ENCODE measurements at regions of chr6 and their contacts with region 1.

Region 1: GRCh38 chr6:166989427-166990032 is 9.7 kb upstream of the CEP43 start:
- DNase-seq: peak; percentile 46
- H3K4me3 Mint-ChIP-seq: no peak overlapping the region
- H3K27ac Mint-ChIP-seq: no peak overlapping the region
- H3K4me1 Mint-ChIP-seq: peaks cover 33% of the 10 kb centered on the region
- H3K27me3 Mint-ChIP-seq: no peaks in the 10 kb centered on the region

Region 2: DNA sequence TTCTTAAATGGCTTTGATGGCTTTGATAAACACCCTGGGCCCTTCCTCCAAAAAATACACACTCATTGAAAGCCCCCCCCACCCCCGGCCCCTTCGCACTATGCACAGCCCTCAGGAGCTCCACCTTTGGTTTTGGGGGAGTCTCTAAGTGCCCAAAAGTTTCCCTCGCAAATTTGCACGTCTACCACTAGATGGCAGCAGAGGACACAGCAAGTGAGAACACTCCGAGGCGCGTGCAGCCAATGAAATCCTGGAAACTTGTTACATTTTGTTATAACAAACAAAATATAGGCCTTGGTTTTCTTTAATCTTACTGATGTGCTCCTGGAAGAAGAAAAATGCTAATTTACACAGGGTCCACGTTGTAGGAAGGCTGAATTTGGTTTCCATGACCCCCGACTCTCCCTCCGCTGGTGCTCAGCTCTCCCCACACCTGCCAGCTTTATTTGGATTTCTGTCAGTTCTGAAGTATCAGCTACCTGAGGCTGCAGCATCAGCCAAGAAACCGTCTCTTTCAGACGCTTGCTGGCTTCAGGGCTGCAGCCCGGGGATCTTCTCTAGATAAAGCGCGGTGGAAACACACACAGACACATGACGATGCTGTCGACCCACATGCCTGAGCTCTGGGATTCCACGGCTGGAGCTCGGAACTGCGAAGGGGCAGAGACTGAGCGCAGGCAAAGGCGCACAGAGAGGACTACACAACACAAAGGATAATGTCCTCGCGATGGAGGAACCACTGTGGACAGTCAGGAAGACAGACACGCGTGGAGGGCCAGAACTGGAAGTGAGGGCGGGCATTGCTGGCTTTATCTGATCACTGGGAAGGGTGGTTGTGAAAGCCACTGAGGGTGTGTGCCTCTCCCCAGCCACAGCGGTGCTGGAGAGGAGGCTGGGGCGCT is 214.1 kb before region 1 on chr6:
- CTCF ChIA-PET with region 1: interaction called, 51 read pairs
- POLR2A ChIA-PET with region 1: interaction called, 3 read pairs
- DNase-seq: peak; percentile 63
- H3K4me3 Mint-ChIP-seq: no peak overlapping the region
- H3K27ac Mint-ChIP-seq: no peak overlapping the region
- H3K4me1 Mint-ChIP-seq: peaks cover 3% of the 10 kb centered on the region
- H3K27me3 Mint-ChIP-seq: peaks cover 14% of the 10 kb centered on the region

Region 3: GRCh38 chr6:166950443-166950821 is 39.1 kb before region 1 on chr6:
- CTCF ChIA-PET with region 1: interaction called, 25 read pairs
- POLR2A ChIA-PET with region 1: interaction called, 19 read pairs
- DNase-seq: peak; percentile 51
- H3K4me3 Mint-ChIP-seq: peak overlapping the region; percentile 67
- H3K27ac Mint-ChIP-seq: peak overlapping the region; percentile 100
- H3K4me1 Mint-ChIP-seq: peaks cover 61% of the 10 kb centered on the region
- H3K27me3 Mint-ChIP-seq: no peaks in the 10 kb centered on the region

Region 4: DNA sequence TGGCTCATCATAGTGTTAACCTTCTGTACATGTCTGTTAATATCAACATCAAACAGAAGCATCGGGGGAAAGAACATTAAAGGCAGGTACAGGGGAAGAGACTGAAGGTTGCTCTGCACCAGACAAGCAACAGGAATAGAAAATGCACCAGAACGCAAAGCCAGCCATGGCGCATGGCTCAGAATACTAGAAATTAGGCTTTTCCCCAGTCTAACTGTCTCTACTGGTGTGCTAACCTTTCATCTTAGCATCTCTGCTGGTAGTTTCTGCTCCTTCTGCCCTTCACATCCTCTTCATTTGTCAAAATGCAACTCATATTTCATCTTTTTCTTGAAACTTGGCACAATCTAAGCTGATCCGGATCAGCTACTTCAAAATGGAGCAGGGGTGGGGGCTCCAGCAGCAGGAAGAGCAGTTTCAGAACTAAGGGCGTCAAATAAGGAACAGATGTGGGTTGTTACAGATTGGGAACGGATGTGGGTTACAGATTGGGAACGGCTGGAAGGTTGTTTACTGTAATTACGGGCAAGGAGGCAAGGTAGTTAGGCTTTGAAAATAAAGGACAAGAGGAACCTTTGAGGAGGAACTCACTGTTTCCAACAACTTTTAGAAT is 20.0 kb before region 1 on chr6:
- CTCF ChIA-PET with region 1: interaction called, 27 read pairs
- POLR2A ChIA-PET with region 1: interaction called, 4 read pairs
- DNase-seq: no peak
- H3K4me3 Mint-ChIP-seq: no peak overlapping the region
- H3K27ac Mint-ChIP-seq: peak overlapping the region; percentile 70
- H3K4me1 Mint-ChIP-seq: peaks cover 26% of the 10 kb centered on the region
- H3K27me3 Mint-ChIP-seq: no peaks in the 10 kb centered on the region

Region 5: DNA sequence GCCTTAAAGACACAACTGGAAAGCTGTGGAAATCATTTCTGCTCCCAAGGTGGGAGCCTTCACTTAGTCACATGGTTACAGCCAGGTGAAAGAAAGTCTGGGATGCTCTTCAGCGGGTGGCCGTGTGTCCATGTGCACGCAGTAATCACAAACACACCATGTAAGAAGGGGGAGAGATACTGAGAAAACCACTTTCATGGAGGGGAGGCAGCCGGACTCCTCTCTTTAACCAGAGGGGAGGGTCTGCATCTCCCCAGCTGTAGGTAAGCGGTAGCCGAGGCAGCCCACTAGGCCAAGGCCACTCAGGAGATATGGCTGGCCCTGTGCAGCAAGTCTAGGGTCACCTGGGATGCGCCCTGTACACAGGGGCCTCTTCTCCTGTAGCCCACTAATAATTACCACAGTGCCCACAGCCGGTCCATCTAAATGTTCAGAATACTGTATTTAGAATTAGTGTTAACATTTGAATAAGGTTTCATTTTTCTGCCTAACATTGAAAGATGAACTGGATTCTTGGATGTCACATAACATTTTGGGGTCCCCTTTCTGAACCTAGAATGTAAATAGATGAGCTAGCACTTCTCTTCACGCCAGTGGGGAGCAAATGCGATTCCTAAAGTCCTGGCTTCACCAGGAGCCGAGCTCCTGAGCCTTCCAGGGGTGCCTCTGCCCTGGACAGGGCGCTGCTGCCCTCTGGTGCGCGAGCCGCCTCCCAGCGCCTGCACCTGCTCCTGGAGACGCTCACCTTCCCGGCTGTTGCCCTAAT is 152.3 kb after region 1 on chr6:
- CTCF ChIA-PET with region 1: interaction called, 18 read pairs
- POLR2A ChIA-PET with region 1: no interaction called
- DNase-seq: peak; percentile 57
- H3K4me3 Mint-ChIP-seq: no peak overlapping the region
- H3K27ac Mint-ChIP-seq: no peak overlapping the region
- H3K4me1 Mint-ChIP-seq: peaks cover 22% of the 10 kb centered on the region
- H3K27me3 Mint-ChIP-seq: no peaks in the 10 kb centered on the region